ENCODE measurements at regions of chr12 and their contacts with region 1.

Region 1: DNA sequence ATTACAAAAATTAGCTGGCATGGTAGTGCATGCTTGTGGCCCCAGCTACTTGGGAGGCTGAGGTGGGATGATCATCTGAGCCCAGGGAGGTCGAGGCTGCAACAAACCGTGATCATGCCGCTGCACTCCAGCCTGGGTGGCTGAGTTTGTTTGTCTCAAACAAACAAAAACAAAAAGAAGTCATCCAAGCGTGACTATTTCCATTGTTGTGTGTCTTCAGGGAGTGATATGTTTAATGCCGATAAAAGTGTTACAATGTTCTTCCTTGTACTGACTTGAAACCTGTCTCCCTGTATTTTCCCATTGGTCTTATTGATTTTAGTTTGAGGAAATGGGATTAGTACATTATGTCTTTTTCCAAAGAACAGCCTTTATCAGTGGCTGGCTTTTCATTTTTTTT is 75.6 kb upstream of the USP44 start:
- DNase-seq: no peak
- ATAC-seq: peak; percentile 26 to 71 (median 46)
- H3K4me3 ChIP-seq: no peak overlapping the region
- H3K27ac ChIP-seq: peak overlapping the region; percentile 41 to 85 (median 66)
- H3K4me1 ChIP-seq: peaks cover 16 to 33% (median 30%) of the 10 kb centered on the region in 3 donors
- H3K27me3 ChIP-seq: no peaks in the 10 kb centered on the region
- CTCF ChIP-seq: no peak

Region 2: GRCh38 chr12:95402096-95402495 is 224.8 kb before region 1 on chr12:
- intact Hi-C with region 1: no loop called
- DNase-seq: no peak
- ATAC-seq: no peak
- H3K4me3 ChIP-seq: no peak overlapping the region
- H3K27ac ChIP-seq: no peak overlapping the region
- H3K4me1 ChIP-seq: no peaks in the 10 kb centered on the region
- H3K27me3 ChIP-seq: no peaks in the 10 kb centered on the region
- CTCF ChIP-seq: no peak

Region 3: DNA sequence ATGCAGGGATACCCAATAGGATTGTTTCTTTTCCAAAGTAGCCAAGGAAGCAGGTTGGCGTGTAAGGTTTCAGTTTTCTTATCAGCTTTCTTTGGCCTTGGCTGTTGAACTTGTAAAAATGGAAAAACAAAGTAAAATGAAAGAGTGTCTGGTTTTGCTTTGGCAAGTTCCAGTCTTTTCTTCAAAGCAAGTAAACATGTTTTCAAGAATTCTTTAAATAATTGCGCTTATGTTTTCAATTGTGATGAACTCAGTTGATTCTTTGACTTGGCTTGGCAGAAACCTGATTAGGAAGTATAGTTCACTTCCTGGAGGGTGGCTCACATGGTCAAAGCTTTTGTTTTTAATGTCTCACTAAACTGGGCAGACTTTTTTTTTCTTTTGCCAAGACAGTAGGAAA is 36.7 kb after region 1 on chr12:
- intact Hi-C with region 1: loop called in 1 of 3 experiments (anchors 5 kb)
- DNase-seq: no peak
- ATAC-seq: peak; percentile 62 to 79 (median 78)
- H3K4me3 ChIP-seq: no peak overlapping the region
- H3K27ac ChIP-seq: peak overlapping the region in 2 of 4 donors; percentile 79 to 83
- H3K4me1 ChIP-seq: peaks cover 6 to 29% (median 27%) of the 10 kb centered on the region in 3 donors
- H3K27me3 ChIP-seq: no peaks in the 10 kb centered on the region
- CTCF ChIP-seq: no peak

Region 4: GRCh38 chr12:95674631-95675030 is 47.8 kb after region 1 on chr12:
- intact Hi-C with region 1: no loop called
- DNase-seq: no peak
- ATAC-seq: peak in 3 of 4 donors; percentile 32 to 61 (median 45)
- H3K4me3 ChIP-seq: no peak overlapping the region
- H3K27ac ChIP-seq: peak overlapping the region in 1 of 4 donors; percentile 6
- H3K4me1 ChIP-seq: peaks cover 6 to 10% (median 8%) of the 10 kb centered on the region in 3 donors
- H3K27me3 ChIP-seq: no peaks in the 10 kb centered on the region
- CTCF ChIP-seq: no peak

Region 5: GRCh38 chr12:95998611-95999286 is 371.9 kb after region 1 on chr12:
- intact Hi-C with region 1: no loop called
- DNase-seq: peak in 3 of 6 donors; percentile 21 to 45 (median 45)
- ATAC-seq: peak; percentile 84 to 97 (median 92)
- H3K4me3 ChIP-seq: no peak overlapping the region
- H3K27ac ChIP-seq: no peak overlapping the region
- H3K4me1 ChIP-seq: no peaks in the 10 kb centered on the region
- H3K27me3 ChIP-seq: no peaks in the 10 kb centered on the region
- CTCF ChIP-seq: peak; percentile 39 to 55 (median 46)

Measured in pancreas (tissue), 10 donors.